ENCODE measurements at regions of chr2 and their contacts with region 1.

Region 1: DNA sequence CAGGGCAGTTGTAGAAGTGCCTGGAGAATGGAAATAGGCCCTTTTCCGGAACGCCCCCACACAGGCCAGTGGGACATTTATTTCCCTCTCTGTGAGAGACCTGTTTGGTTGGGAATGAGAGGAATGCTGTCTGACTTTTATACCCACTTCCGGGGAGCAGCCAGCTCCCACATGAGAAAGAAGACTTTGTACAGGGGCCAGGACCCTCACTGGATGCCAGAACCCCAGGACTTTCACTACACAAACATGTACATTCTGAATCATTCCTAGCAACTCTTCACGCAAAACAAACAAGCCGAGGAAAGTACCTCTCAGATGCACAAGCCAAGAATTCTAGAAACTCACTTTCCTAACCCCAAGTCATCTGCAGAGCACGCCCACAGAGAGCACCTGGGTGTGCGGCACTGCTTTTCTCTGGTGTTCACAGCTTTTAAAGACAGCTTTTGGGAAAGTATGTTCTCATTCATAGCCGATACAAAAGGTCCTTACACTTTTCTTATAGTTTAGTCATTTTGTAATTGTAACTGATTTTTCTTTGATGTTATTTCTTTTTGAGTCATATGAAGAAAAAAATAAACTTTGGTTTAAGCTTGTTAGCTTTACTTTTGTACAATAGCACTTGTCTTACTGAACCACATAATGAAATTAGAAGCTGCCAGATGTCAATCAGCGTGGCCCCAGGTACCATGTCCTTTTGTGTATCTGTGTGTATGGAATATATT is 856.1 kb upstream of the ID2 start:
- DNase-seq: peak; percentile 83
- H3K4me3 Mint-ChIP-seq: peak overlapping the region; percentile 47
- H3K27ac Mint-ChIP-seq: peak overlapping the region; percentile 96
- H3K4me1 Mint-ChIP-seq: peaks cover 28% of the 10 kb centered on the region
- H3K27me3 Mint-ChIP-seq: no peaks in the 10 kb centered on the region

Region 2: GRCh38 chr2:7437716-7438632 is 387.8 kb before region 1 on chr2:
- intact Hi-C with region 1: loop called (anchors 1 kb)
- DNase-seq: peak; percentile 75
- H3K4me3 Mint-ChIP-seq: peak overlapping the region; percentile 53
- H3K27ac Mint-ChIP-seq: peak overlapping the region; percentile 96
- H3K4me1 Mint-ChIP-seq: peaks cover 65% of the 10 kb centered on the region
- H3K27me3 Mint-ChIP-seq: no peaks in the 10 kb centered on the region

Region 3: GRCh38 chr2:7672027-7672684 is 153.6 kb before region 1 on chr2:
- intact Hi-C with region 1: loop called (anchors 2 kb)
- DNase-seq: peak; percentile 85
- H3K4me3 Mint-ChIP-seq: peak overlapping the region; percentile 70
- H3K27ac Mint-ChIP-seq: peak overlapping the region; percentile 98
- H3K4me1 Mint-ChIP-seq: peaks cover 60% of the 10 kb centered on the region
- H3K27me3 Mint-ChIP-seq: no peaks in the 10 kb centered on the region

Region 4: GRCh38 chr2:7703523-7704144 is 122.1 kb before region 1 on chr2:
- intact Hi-C with region 1: no loop called
- DNase-seq: no peak
- H3K4me3 Mint-ChIP-seq: no peak overlapping the region
- H3K27ac Mint-ChIP-seq: no peak overlapping the region
- H3K4me1 Mint-ChIP-seq: peaks cover 10% of the 10 kb centered on the region
- H3K27me3 Mint-ChIP-seq: peaks cover 3% of the 10 kb centered on the region

Region 5: GRCh38 chr2:7758073-7758759 is 67.5 kb before region 1 on chr2:
- intact Hi-C with region 1: loop called (anchors 1 kb)
- DNase-seq: peak; percentile 43
- H3K4me3 Mint-ChIP-seq: peak overlapping the region; percentile 15
- H3K27ac Mint-ChIP-seq: peak overlapping the region; percentile 82
- H3K4me1 Mint-ChIP-seq: peaks cover 16% of the 10 kb centered on the region
- H3K27me3 Mint-ChIP-seq: no peaks in the 10 kb centered on the region

Region 6: DNA sequence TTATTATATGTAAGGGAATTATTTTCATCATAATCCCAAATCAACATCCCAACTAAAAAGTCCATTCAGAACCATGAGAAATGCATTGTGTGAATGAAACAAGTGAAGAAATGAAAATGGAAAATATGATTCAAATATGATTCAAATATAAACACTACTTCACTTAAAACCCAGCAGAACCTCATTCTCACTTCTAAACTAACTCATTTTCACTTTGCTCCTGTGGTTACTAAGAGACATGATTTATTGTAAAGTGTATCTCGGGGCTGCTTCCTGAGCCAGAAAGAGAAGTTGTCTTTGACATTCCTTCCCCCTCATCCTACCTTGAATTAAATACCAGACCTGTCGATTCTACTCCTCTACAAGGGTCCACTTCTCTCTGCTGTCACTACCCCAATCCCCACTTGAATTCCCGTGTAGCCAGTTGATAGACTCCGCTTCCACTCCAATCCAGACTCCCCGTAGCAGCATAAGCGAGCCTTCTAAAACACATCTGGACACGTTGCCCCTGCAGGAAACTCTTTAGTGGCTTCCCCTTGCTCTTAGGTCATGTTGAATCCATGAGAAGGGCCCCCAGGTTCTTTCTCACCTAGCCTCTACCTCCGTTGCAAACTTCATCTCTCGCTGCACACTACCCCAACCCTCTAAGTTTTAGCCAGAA is 159.1 kb after region 1 on chr2:
- intact Hi-C with region 1: loop called (anchors 1 kb)
- DNase-seq: no peak
- H3K4me3 Mint-ChIP-seq: peak overlapping the region; percentile 13
- H3K27ac Mint-ChIP-seq: peak overlapping the region; percentile 87
- H3K4me1 Mint-ChIP-seq: peaks cover 17% of the 10 kb centered on the region
- H3K27me3 Mint-ChIP-seq: no peaks in the 10 kb centered on the region

Region 7: GRCh38 chr2:8234757-8235374 is 409.1 kb after region 1 on chr2:
- intact Hi-C with region 1: loop called (anchors 2 kb)
- DNase-seq: no peak
- H3K4me3 Mint-ChIP-seq: no peak overlapping the region
- H3K27ac Mint-ChIP-seq: no peak overlapping the region
- H3K4me1 Mint-ChIP-seq: peaks cover 22% of the 10 kb centered on the region
- H3K27me3 Mint-ChIP-seq: peaks cover 1% of the 10 kb centered on the region